ENCODE measurements at regions of chr9 and their contacts with region 1.

Region 1: GRCh38 chr9:72948906-72949582 is 3.8 kb downstream of the ALDH1A1 start:
- DNase-seq: no peak
- H3K4me3 ChIP-seq: peak overlapping the region; percentile 62
- H3K27me3 ChIP-seq: no peaks in the 10 kb centered on the region
- CTCF ChIP-seq: no peak

Region 2: GRCh38 chr9:72931437-72931836 is 17.6 kb before region 1 on chr9:
- CTCF ChIA-PET with region 1: interaction called, 12 read pairs
- POLR2A ChIA-PET with region 1: no interaction called
- DNase-seq: no peak
- H3K4me3 ChIP-seq: no peak overlapping the region
- H3K27me3 ChIP-seq: no peaks in the 10 kb centered on the region
- CTCF ChIP-seq: no peak

Measured in BJ (cell line).